Tibial artery (tissue), 4 donors: ENCODE measurements at regions of chr6 and their contacts with region 1.

Region 1: GRCh38 chr6:151044465-151045441 is 179.3 kb downstream of the MTHFD1L start:
- DNase-seq: peak; percentile 56 to 84
- H3K4me3 ChIP-seq: peak overlapping the region; percentile 25 to 26
- H3K27ac ChIP-seq: peak overlapping the region; percentile 65 to 67
- H3K4me1 ChIP-seq: peaks cover 0 to 47% (median 21%) of the 10 kb centered on the region in 4 donors
- H3K27me3 ChIP-seq: no peaks in the 10 kb centered on the region
- CTCF ChIP-seq: no peak

Region 2: DNA sequence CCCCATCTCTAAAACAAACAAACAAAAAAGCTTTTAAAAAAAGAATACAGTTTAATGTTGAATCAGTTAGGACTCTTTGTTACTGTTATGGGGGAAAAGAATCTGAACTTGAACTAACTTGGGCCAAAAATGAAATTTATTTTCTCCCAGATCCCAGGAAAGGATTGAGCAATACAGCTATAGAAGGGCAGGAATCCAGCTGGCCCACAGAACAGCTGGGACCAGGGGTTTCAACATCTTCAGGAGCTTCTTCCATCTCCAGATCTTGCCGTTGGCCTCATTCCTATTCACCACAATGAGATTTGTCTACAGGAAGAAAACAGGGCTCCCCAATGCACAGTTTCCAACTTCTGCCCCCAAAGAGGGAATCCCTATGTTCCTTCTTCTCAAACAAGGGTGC is 151.8 kb after region 1 on chr6:
- intact Hi-C with region 1: no loop called
- DNase-seq: peak; percentile 75 to 78
- H3K4me3 ChIP-seq: no peak overlapping the region
- H3K27ac ChIP-seq: no peak overlapping the region
- H3K4me1 ChIP-seq: peaks cover 0 to 12% (median 0%) of the 10 kb centered on the region in 4 donors
- H3K27me3 ChIP-seq: peaks cover 0 to 3% of the 10 kb centered on the region in 2 donors
- CTCF ChIP-seq: no peak

Region 3: GRCh38 chr6:151451950-151452749 is 407.4 kb after region 1 on chr6 and contains the start of gene RMND1:
- intact Hi-C with region 1: loop called (anchors 5 kb)
- DNase-seq: peak; percentile 100
- H3K4me3 ChIP-seq: peak within 1 kb of the TSS; percentile 84 to 89
- H3K27ac ChIP-seq: peak within 1 kb of the TSS; percentile 93 to 97
- H3K4me1 ChIP-seq: peaks cover 0 to 30% (median 20%) of the 10 kb centered on the region in 4 donors
- H3K27me3 ChIP-seq: no peaks in the 10 kb centered on the region
- CTCF ChIP-seq: no peak